ENCODE measurements at regions of chr1 and their contacts with region 1.

Region 1: GRCh38 chr1:156140879-156141252 is 12.5 kb upstream of the SEMA4A start:
- DNase-seq: no peak
- H3K4me3 ChIP-seq: no peak overlapping the region
- H3K4me1 ChIP-seq: no peaks in the 10 kb centered on the region; the same call in 1 of the 2 replicates
- H3K27me3 ChIP-seq: no peaks in the 10 kb centered on the region

Region 2: DNA sequence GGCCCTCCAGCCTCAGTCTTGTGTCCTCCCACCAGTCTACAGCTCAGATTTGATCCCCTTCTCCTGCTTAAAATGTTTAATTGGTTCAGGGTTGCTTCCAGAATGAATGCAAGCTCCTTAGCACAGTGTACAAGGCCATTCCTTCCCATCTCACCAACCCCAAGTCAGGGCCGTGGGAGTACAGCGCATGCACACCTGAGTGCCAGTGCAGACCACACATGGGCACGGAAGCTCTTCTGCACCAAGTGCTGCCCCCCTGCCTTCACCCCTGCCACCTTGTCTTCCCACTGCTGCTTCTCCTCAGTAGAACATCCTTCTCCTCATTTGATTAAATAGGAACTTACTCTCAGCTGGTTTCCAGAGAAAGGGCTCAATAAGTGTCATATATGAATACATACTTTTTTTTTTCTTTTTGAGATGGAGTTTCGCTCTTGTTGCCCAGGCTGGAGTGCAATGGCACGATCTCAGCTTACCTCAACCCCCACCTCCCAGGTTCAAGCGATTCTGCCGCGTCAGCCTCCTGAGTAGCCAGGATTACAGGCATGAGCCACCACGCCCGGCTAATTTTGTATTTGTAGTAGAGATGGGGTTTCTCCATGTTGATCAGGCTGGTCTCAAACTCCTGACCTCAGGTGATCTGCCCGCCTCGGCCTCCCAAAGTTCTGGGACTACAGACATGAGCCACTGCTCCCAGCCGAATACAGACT is 81.3 kb after region 1 on chr1:
- in situ Hi-C with region 1: loop called (anchors 5 kb)
- DNase-seq: peak in 1 of 2 experiments; percentile 1
- H3K4me3 ChIP-seq: no peak overlapping the region
- H3K4me1 ChIP-seq: no peaks in the 10 kb centered on the region; the same call in 1 of the 2 replicates
- H3K27me3 ChIP-seq: no peaks in the 10 kb centered on the region

Region 3: GRCh38 chr1:156689035-156689952 is 548.4 kb after region 1 on chr1:
- in situ Hi-C with region 1: no loop called
- DNase-seq: peak; percentile 92
- H3K4me3 ChIP-seq: peak overlapping the region; percentile 9
- H3K4me1 ChIP-seq: peaks cover 28% of the 10 kb centered on the region
- H3K27me3 ChIP-seq: no peaks in the 10 kb centered on the region

Measured in HAP-1 (cell line).